ENCODE measurements at regions of chr3 and their contacts with region 1.

Region 1: GRCh38 chr3:27319847-27320526 is 49.2 kb downstream of the NEK10 start:
- DNase-seq: peak in 3 of 5 donors; percentile 25 to 38 (median 34)
- ATAC-seq: peak; percentile 56 to 84 (median 82)
- H3K4me3 ChIP-seq: no peak overlapping the region
- H3K27ac ChIP-seq: peak overlapping the region in 6 of 12 donors; percentile 11 to 84 (median 32)
- H3K4me1 ChIP-seq: peaks cover 0 to 15% (median 0%) of the 10 kb centered on the region in 12 donors
- H3K27me3 ChIP-seq: no peaks in the 10 kb centered on the region
- CTCF ChIP-seq: no peak
- POLR2A ChIP-seq: no peak

Region 2: GRCh38 chr3:27279123-27279522 is 40.9 kb before region 1 on chr3:
- intact Hi-C with region 1: no loop called
- DNase-seq: no peak
- ATAC-seq: no peak
- H3K4me3 ChIP-seq: no peak overlapping the region
- H3K27ac ChIP-seq: no peak overlapping the region
- H3K4me1 ChIP-seq: no peaks in the 10 kb centered on the region
- H3K27me3 ChIP-seq: no peaks in the 10 kb centered on the region
- CTCF ChIP-seq: peak in 10 of 12 donors; percentile 15 to 60 (median 44)
- POLR2A ChIP-seq: no peak

Region 3: GRCh38 chr3:27462228-27462627 is 142.2 kb after region 1 on chr3:
- intact Hi-C with region 1: loop called in 1 of 10 experiments (anchors 5 kb)
- DNase-seq: no peak
- ATAC-seq: no peak
- H3K4me3 ChIP-seq: no peak overlapping the region
- H3K27ac ChIP-seq: no peak overlapping the region
- H3K4me1 ChIP-seq: peaks cover 0 to 10% (median 3%) of the 10 kb centered on the region in 12 donors
- H3K27me3 ChIP-seq: no peaks in the 10 kb centered on the region
- CTCF ChIP-seq: no peak
- POLR2A ChIP-seq: no peak

Region 4: GRCh38 chr3:27533718-27534573 is 214.0 kb after region 1 on chr3:
- intact Hi-C with region 1: no loop called
- DNase-seq: peak in 4 of 5 donors; percentile 18 to 68 (median 44)
- ATAC-seq: peak; percentile 53 to 89 (median 81)
- H3K4me3 ChIP-seq: no peak overlapping the region
- H3K27ac ChIP-seq: peak overlapping the region in 10 of 12 donors; percentile 17 to 85 (median 53)
- H3K4me1 ChIP-seq: peaks cover 0 to 40% (median 8%) of the 10 kb centered on the region in 12 donors
- H3K27me3 ChIP-seq: no peaks in the 10 kb centered on the region
- CTCF ChIP-seq: peak in 2 of 12 donors; percentile 18 to 26
- POLR2A ChIP-seq: no peak